PC-9 (cell line): ENCODE measurements at regions of chr10 and their contacts with region 1.

Region 1: DNA sequence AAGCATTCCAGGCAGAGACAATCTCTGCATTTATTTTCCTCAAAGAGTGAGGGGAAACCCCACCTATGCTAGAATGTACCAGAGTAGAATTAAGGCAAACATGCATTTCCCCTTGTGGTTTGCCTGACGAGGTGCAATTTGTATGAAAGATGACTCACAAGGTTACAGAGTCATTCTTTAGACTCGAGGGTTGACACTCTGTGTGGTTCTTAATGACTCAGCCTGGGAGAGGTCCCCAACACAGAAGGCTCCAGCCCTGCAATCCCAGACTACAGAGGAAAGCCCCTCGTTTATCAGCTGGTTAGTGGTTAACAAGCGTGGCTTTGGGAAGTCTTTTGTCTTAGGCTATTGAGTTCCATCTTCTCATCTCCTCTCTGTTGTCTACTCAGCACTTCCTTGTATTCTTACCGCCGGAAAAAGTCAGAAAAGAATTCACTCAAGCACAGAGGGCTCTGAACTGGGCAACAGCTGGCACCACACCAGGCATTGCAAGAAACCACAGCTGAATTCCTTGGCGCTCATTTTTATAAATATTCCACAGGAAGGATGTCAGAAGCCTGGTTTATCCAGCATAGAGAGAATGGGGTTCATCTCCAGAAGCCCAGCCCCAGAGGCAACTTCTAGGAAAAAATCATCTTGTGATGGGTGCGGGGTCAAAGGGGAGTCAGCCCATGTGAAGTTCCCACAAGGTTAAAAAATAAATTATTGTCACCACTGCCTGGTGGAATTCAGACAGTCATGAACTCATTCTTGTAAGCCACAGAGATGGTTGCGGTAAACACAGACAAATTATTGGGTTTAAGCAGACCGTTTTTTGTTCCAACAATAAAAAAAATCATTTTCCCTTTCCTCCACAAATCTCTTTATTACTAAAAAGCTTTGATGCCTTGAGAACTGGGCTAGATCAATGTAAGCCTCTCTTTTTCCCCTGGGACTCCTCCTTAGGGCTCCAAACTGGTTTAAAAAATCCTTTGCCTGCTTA is 24.5 kb upstream of the SVIL start:
- DNase-seq: peak; percentile 87 to 97
- H3K4me3 ChIP-seq: no peak overlapping the region
- H3K27ac ChIP-seq: peak overlapping the region; percentile 76
- H3K4me1 ChIP-seq: peaks cover 51% of the 10 kb centered on the region
- H3K27me3 ChIP-seq: no peaks in the 10 kb centered on the region
- CTCF ChIP-seq: peak; percentile 45; the same call in 1 of the 2 replicates

Region 2: DNA sequence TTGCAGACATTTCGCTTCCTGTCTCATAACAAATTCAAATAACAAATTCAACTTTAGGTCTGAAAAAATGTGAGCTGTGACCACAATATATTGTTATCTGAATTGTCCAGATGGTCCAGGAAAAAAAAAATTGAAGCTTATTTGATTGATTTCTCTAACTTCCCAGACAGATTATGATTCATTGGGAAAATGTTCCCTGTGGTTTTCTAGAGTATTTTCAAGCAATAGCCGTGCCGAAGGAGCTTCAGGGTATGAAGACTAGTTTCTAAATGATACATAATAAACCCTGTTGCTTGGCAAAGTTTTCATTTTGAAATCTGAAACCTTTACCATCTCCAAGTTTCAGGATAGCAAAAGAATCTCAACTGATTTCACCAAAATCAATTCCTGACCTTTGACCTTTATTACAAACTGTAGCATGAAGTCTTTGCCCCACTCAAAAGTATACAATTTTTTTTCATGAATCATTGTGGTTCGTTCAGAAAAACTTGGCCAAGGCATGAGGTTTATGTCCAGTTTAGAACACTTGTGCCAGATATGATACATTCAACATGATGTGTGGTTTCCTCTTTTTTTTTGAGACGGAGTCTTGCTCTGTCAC is 290.2 kb after region 1 on chr10:
- CTCF ChIA-PET with region 1: no interaction called
- POLR2A ChIA-PET with region 1: no interaction called
- intact Hi-C with region 1: loop called (anchors 1 kb)
- DNase-seq: peak; percentile 44 to 96
- H3K4me3 ChIP-seq: no peak overlapping the region
- H3K27ac ChIP-seq: peak overlapping the region; percentile 91
- H3K4me1 ChIP-seq: peaks cover 51% of the 10 kb centered on the region
- H3K27me3 ChIP-seq: no peaks in the 10 kb centered on the region
- CTCF ChIP-seq: no peak